Ascending aorta (tissue), 2 donors: ENCODE measurements at regions of chr18 and their contacts with region 1.

Region 1: DNA sequence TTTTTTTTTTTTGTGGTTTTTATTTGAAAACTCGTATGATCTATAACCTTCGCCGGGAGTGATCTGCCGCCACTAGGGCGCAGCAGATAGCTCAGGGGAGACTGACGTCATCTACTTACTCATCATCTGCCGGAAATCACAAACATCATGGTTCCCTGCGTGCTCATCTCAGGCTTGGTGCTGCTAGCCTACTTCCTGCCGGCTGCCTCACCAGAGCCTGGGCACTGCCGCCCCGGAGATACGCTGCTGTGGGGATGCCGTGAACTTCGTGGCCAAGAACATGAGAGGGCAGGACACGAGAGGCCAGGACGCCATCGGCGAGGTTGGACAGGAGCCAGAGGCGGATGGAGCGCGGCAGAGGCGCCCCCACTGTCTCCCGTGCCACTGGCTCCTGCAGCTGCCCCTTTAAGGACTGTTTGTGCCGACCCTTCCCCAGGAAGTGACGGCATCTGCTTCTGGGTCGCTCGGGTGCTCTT is 68.8 kb downstream of the DOK6 start:
- DNase-seq: no peak
- H3K4me3 ChIP-seq: no peak overlapping the region
- H3K27ac ChIP-seq: no peak overlapping the region
- H3K4me1 ChIP-seq: no peaks in the 10 kb centered on the region
- H3K27me3 ChIP-seq: no peaks in the 10 kb centered on the region
- CTCF ChIP-seq: no peak

Region 2: GRCh38 chr18:69455125-69455524 is 14.4 kb before region 1 on chr18:
- intact Hi-C with region 1: loop called (anchors 1 kb)
- DNase-seq: no peak
- H3K4me3 ChIP-seq: no peak overlapping the region
- H3K27ac ChIP-seq: no peak overlapping the region
- H3K4me1 ChIP-seq: no peaks in the 10 kb centered on the region
- H3K27me3 ChIP-seq: no peaks in the 10 kb centered on the region
- CTCF ChIP-seq: no peak